Activated CD4-positive, alpha-beta memory T cell treated with anti-CD3 and anti-CD28 coated beads, Interleukin-2, amount 10 ng/mL, durations not matched to agents 7 days and 5 days (primary cell): ENCODE measurements at regions of chr14 and their contacts with region 1.

Region 1: GRCh38 chr14:52351233-52352060 is 37.3 kb downstream of the PTGER2 start:
- DNase-seq: peak; percentile 39
- H3K4me3 Mint-ChIP-seq: peak overlapping the region; percentile 72
- H3K27ac Mint-ChIP-seq: peak overlapping the region; percentile 95
- H3K4me1 Mint-ChIP-seq: peaks cover 74% of the 10 kb centered on the region
- H3K27me3 Mint-ChIP-seq: peaks cover 4% of the 10 kb centered on the region

Region 2: GRCh38 chr14:52299692-52300278 is 51.7 kb before region 1 on chr14:
- CTCF ChIA-PET with region 1: interaction called, 4 read pairs
- POLR2A ChIA-PET with region 1: interaction called, 10 read pairs
- DNase-seq: no peak
- H3K4me3 Mint-ChIP-seq: no peak overlapping the region
- H3K27ac Mint-ChIP-seq: no peak overlapping the region
- H3K4me1 Mint-ChIP-seq: peaks cover 41% of the 10 kb centered on the region
- H3K27me3 Mint-ChIP-seq: peaks cover 12% of the 10 kb centered on the region

Region 3: GRCh38 chr14:52325126-52325525 is 26.3 kb before region 1 on chr14:
- CTCF ChIA-PET with region 1: interaction called, 3 read pairs
- POLR2A ChIA-PET with region 1: interaction called, 254 read pairs
- DNase-seq: peak; percentile 47
- H3K4me3 Mint-ChIP-seq: peak overlapping the region; percentile 46
- H3K27ac Mint-ChIP-seq: peak overlapping the region; percentile 86
- H3K4me1 Mint-ChIP-seq: peaks cover 91% of the 10 kb centered on the region
- H3K27me3 Mint-ChIP-seq: peaks cover 2% of the 10 kb centered on the region

Region 4: GRCh38 chr14:52333823-52334657 is 17.4 kb before region 1 on chr14:
- CTCF ChIA-PET with region 1: interaction called, 3 read pairs
- POLR2A ChIA-PET with region 1: interaction called, 15 read pairs
- DNase-seq: no peak
- H3K4me3 Mint-ChIP-seq: no peak overlapping the region
- H3K27ac Mint-ChIP-seq: no peak overlapping the region
- H3K4me1 Mint-ChIP-seq: peaks cover 30% of the 10 kb centered on the region
- H3K27me3 Mint-ChIP-seq: peaks cover 2% of the 10 kb centered on the region

Region 5: DNA sequence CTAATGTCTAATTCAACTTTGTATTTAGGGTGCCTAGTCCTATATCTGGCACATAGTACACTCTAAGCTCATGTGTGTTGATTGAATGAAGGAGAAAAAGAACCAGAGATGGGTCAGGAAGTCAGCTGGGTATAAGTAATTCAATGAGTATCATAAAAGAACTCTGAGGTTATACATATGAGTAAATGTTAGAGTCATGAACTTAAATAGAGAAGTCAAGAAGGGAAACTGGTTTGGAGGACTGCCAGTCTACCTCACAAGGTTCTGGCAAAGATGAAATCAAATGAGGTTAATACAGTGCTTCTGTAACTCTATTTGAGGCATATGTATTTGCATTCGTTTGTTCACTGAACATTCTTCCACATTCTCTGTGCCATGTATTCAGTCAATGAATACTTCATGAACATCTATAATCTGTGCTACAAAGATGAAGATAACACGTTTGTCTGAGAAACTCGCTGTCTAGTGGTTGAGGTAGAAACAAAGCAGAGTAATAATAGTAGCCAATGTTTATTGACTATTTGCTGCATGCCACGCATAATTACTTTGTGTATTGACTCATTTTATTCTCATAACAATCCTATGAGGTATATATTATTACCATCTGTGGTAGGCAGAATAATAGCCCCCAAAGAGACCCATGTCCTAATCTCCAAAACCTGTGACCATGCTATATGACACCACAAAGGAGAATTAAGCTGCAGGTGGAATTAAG is 51.5 kb after region 1 on chr14:
- CTCF ChIA-PET with region 1: interaction called, 8 read pairs
- POLR2A ChIA-PET with region 1: interaction called, 52 read pairs
- DNase-seq: no peak
- H3K4me3 Mint-ChIP-seq: no peak overlapping the region
- H3K27ac Mint-ChIP-seq: peak overlapping the region; percentile 40
- H3K4me1 Mint-ChIP-seq: peaks cover 70% of the 10 kb centered on the region
- H3K27me3 Mint-ChIP-seq: peaks cover 10% of the 10 kb centered on the region

Region 6: DNA sequence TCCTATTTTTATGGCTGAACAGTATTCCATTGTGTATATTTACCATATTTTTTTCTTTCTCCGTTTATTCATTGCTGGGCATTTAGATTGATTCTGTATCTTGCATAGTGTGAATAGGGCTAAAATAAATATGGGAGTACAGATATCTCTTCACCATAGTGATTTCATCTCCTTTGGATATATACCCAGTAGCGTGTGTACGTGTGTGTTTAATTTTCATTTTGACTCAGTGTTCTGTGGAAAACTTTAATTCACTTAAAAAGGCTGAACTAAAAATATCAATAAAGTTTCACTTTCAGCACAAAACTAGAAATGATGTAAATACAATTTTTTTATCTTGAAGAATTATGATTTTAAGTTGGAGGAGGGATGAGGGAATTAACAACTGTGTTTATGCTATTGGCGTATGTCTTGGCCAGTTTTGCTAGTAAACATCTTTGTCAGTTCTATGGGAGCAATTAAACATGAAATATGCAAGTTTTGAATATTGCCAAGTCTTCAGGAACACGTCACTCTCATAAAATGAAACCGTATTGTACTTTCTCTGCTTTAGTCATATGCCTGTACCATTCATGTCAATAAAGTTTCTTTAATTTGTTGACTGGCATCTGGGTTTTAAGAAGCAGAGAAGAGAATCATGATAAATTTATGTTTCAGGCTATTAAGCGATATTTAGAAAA is 62.4 kb after region 1 on chr14:
- CTCF ChIA-PET with region 1: no interaction called
- POLR2A ChIA-PET with region 1: interaction called, 19 read pairs
- DNase-seq: no peak
- H3K4me3 Mint-ChIP-seq: peak overlapping the region; percentile 50
- H3K27ac Mint-ChIP-seq: peak overlapping the region; percentile 75
- H3K4me1 Mint-ChIP-seq: peaks cover 50% of the 10 kb centered on the region
- H3K27me3 Mint-ChIP-seq: no peaks in the 10 kb centered on the region

Region 7: DNA sequence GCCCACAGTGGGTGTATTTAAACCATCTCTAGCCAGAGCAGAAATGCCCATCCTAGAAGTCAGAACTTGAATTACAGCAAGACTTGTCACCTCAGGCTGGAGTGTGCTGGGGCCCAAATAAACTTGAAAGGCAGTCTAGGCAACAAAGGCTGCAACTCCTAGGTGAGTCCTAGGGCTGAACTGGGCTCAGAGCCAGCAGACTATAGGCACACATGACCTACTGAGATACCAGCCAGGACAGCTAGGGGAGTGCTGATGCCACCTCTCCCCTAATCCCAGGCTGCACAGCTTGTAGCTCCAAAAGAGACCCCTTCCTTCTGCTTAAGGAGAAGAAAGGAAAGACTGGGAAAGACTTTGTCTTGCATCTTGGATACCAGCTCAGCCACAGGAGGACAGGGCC is 94.9 kb after region 1 on chr14:
- CTCF ChIA-PET with region 1: no interaction called
- POLR2A ChIA-PET with region 1: no interaction called
- DNase-seq: no peak
- H3K4me3 Mint-ChIP-seq: no peak overlapping the region
- H3K27ac Mint-ChIP-seq: no peak overlapping the region
- H3K4me1 Mint-ChIP-seq: peaks cover 11% of the 10 kb centered on the region
- H3K27me3 Mint-ChIP-seq: no peaks in the 10 kb centered on the region